Right ventricle myocardium inferior (tissue), 1 donor: ENCODE measurements at regions of chr11 and their contacts with region 1.

Region 1: DNA sequence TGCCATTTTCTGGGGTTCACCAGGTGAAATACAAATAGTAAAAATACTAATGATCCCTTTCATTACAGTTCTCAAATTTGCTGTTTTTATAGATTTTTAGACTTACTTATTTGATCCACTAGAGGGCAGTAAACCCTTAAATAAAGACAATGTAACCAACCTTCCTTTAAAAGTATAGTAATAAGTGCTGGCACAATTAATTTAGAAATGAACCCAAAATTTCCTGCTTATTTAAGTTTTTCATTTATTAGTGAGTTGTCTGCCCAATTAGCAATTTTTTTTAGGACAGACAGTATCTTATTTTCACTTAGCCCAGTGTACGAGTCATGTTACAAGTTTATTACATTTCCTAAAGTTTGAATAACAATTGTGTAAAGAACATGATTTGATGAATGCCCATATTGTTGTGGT is 4.7 kb downstream of the DDIAS start:
- DNase-seq: no peak
- ATAC-seq: no peak

Region 2: DNA sequence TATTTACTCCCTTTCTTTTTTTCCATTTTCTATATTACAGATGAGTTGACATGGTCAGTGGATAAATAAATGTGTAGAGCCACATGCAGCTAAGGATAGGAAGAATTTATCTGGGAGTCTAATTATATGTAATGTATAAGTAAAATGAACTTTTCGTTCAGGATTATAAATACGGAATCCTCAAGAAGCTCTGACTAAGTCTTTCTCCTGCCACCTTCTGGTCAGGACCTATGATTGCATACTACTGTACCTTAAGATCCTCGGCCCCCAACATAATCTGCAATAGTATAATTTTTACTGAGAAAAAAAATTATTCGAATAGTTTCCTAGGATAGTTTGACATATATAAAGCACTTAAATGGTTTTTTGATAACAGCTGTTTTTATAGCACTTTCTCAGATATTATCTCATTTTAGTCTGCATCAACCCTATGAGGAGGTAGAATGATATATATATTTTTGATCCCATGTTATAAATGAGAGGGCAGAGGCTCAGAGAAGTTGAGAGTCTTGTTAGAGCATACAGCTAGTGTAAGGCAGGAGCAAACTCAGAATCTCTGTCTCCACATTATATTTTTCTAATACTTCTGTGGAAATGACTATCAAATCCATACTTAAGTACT is 343.8 kb after region 1 on chr11:
- intact Hi-C with region 1: loop called (anchors 2 kb)
- DNase-seq: no peak
- ATAC-seq: peak; percentile 54